Mammary epithelial cell (primary cell): ENCODE measurements at regions of chr5 and their contacts with region 1.

Region 1: DNA sequence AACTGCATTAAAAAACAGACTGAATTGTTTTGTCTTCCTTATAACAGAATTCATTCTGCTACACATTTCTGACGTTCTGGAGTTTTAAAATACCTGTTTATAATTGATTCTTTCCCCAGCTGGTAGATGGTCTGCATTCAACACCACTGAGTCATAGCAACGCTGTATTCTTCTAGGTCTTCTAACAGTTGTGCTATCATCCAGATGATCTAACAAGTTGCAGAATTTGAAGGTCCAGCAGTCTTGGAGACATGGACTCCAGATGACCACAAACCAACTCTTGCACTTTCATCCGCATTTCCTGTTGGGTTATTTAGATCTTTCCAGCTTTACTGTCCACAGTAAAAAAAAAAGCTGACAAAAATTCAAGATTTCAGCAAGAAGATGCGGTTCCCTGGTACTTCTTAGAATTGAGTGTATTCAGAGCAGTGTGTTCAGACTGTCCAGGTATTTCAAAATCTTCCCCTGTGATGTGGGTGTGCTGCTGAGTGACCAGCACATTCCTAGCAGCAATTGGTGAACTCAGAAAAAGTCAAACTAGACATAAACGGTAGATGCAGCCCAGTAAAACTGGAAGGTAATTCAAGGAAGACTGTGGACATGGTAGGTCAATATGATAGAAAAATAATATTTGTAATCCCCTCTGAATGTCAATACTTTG is 50.2 kb downstream of the CSNK1A1 start:
- DNase-seq: no peak
- H3K4me3 ChIP-seq: no peak overlapping the region
- H3K27ac ChIP-seq: no peak overlapping the region
- H3K4me1 ChIP-seq: no peaks in the 10 kb centered on the region
- H3K27me3 ChIP-seq: no peaks in the 10 kb centered on the region
- CTCF ChIP-seq: no peak

Region 2: GRCh38 chr5:149517461-149518122 is 16.5 kb after region 1 on chr5:
- CTCF ChIA-PET with region 1: no interaction called
- dilution Hi-C with region 1: no loop called
- in situ Hi-C with region 1: no loop called
- intact Hi-C with region 1: loop called (anchors 2 kb)
- DNase-seq: no peak
- H3K4me3 ChIP-seq: no peak overlapping the region
- H3K27ac ChIP-seq: no peak overlapping the region
- H3K4me1 ChIP-seq: peaks cover 3% of the 10 kb centered on the region
- H3K27me3 ChIP-seq: no peaks in the 10 kb centered on the region
- CTCF ChIP-seq: no peak

Region 3: DNA sequence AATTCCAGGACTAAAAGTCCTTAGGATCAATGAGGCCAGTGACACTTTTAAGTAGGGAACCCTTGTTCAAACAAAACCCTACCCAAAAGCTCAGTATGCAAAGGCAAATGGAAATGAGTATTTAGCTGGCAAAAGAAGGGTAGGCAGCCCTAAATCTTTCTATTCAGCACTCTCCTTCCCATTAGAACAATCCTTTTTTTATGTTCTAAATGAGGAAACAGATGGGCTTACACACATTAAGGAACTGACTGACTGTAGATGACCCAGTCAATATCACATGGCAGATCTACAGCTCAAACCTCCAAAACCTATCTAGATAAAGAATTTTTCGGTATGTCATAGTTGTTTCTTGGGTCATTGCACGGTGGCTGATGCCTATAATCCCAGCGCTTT is 43.0 kb after region 1 on chr5:
- CTCF ChIA-PET with region 1: no interaction called
- dilution Hi-C with region 1: no loop called
- in situ Hi-C with region 1: no loop called
- intact Hi-C with region 1: loop called (anchors 5 kb)
- DNase-seq: no peak
- H3K4me3 ChIP-seq: no peak overlapping the region
- H3K27ac ChIP-seq: peak overlapping the region; percentile 7
- H3K4me1 ChIP-seq: peaks cover 22% of the 10 kb centered on the region
- H3K27me3 ChIP-seq: no peaks in the 10 kb centered on the region
- CTCF ChIP-seq: no peak

Region 4: DNA sequence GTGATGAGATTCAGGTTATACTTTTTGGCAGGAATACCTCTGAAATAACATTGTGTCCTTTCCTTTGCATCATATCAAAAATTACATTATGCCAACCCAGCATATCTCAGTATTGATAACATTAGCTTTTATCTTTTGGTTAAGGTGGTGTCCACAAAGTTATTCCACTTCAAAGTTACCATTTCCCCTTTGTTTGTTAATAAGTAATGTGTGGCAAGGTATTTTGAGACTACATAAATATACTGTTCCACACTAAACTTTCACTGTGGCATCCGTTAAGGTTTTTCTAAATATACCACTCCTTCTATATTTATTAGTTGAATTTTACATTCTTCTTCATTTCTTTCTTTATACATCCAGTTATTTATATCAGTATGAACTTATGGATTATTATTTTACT is 66.2 kb after region 1 on chr5:
- CTCF ChIA-PET with region 1: no interaction called
- dilution Hi-C with region 1: no loop called
- in situ Hi-C with region 1: no loop called
- intact Hi-C with region 1: no loop called
- DNase-seq: no peak
- H3K4me3 ChIP-seq: no peak overlapping the region
- H3K27ac ChIP-seq: no peak overlapping the region
- H3K4me1 ChIP-seq: peaks cover 23% of the 10 kb centered on the region
- H3K27me3 ChIP-seq: no peaks in the 10 kb centered on the region
- CTCF ChIP-seq: no peak